ENCODE measurements at regions of chr6 and their contacts with region 1.

Region 1: GRCh38 chr6:28104392-28105244 is 19.8 kb upstream of the ZSCAN16 start:
- DNase-seq: peak; percentile 85 to 94 (median 90)
- ATAC-seq: peak; percentile 100
- H3K4me3 ChIP-seq: peak overlapping the region; percentile 57
- H3K27ac ChIP-seq: peak overlapping the region; percentile 70
- H3K4me1 ChIP-seq: peaks cover 4 to 7% of the 10 kb centered on the region in 2 experiments; a peak in 3 of 5 replicates
- H3K27me3 ChIP-seq: no peaks in the 10 kb centered on the region
- CTCF ChIP-seq: peak; percentile 73 to 92 (median 77)
- EP300 ChIP-seq: 0 out of 2 replicates have a peak, but pooled peaks have one; percentile 3
- POLR2A ChIP-seq: peak; percentile 95
- RAD21 ChIP-seq: peak; percentile 46 to 59

Region 2: DNA sequence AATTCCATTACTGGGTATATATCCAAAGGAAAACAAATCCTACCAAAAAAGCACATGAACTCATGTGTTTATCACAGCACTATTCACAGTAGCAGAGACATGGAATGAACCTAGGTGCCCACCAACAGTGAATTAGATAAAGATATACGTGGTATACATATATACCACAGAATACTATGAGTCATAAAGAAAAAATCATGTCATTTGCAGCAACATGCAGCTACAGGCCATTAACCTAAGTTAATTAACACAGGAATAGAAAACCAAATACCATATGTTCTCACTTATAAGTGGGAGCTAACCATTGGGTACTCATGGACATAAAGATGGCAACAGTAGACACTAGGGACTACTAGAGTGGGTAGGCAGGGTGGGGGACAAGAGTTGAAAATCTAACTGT is 196.6 kb before region 1 on chr6:
- CTCF ChIA-PET with region 1: no interaction called
- POLR2A ChIA-PET with region 1: no interaction called
- in situ Hi-C with region 1: no loop called
- intact Hi-C with region 1: loop called (anchors 5 kb)
- DNase-seq: no peak
- ATAC-seq: no peak
- H3K4me3 ChIP-seq: no peak overlapping the region
- H3K27ac ChIP-seq: no peak overlapping the region
- H3K4me1 ChIP-seq: peaks cover 4 to 8% of the 10 kb centered on the region in 2 experiments; a peak in 4 of 5 replicates
- H3K27me3 ChIP-seq: no peaks in the 10 kb centered on the region
- CTCF ChIP-seq: no peak
- EP300 ChIP-seq: no peak
- POLR2A ChIP-seq: no peak
- RAD21 ChIP-seq: no peak

Region 3: DNA sequence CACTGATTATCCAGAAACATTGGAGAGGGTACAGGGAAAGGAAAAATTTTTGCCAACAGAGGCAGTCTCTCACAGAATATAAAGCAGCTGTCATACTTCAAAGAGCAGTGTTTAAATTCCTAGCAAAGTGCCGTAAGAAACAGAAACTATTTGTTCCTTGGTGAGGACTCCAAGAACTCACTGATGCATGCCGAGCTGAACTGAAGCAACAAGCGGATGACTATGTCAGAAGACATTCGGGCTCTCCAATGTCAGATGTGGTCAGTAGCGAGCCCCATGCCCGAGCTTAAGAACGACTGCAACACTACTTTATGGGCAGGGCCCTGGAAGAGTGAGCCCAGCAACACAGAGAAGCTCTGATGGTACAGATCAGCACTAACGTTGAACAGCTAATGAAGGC is 92.9 kb before region 1 on chr6:
- CTCF ChIA-PET with region 1: no interaction called
- POLR2A ChIA-PET with region 1: no interaction called
- in situ Hi-C with region 1: no loop called
- intact Hi-C with region 1: no loop called
- DNase-seq: no peak
- ATAC-seq: no peak
- H3K4me3 ChIP-seq: no peak overlapping the region
- H3K27ac ChIP-seq: no peak overlapping the region
- H3K4me1 ChIP-seq: no peaks in the 10 kb centered on the region
- H3K27me3 ChIP-seq: no peaks in the 10 kb centered on the region
- CTCF ChIP-seq: no peak
- EP300 ChIP-seq: no peak
- POLR2A ChIP-seq: no peak
- RAD21 ChIP-seq: no peak

Region 4: GRCh38 chr6:28080631-28081485 is 23.8 kb before region 1 on chr6:
- CTCF ChIA-PET with region 1: no interaction called
- POLR2A ChIA-PET with region 1: interaction called, 3 read pairs
- in situ Hi-C with region 1: no loop called
- intact Hi-C with region 1: loop called (anchors 2 kb)
- DNase-seq: peak; percentile 91 to 99 (median 93)
- ATAC-seq: peak; percentile 91
- H3K4me3 ChIP-seq: peak overlapping the region; percentile 96
- H3K27ac ChIP-seq: peak overlapping the region; percentile 94
- H3K4me1 ChIP-seq: peaks cover 0 to 2% of the 10 kb centered on the region in 2 experiments; a peak in 4 of 5 replicates
- H3K27me3 ChIP-seq: no peaks in the 10 kb centered on the region
- CTCF ChIP-seq: no peak; a peak in 1 of 6 replicates
- EP300 ChIP-seq: peak; percentile 68; the same call in 1 of the 2 replicates
- POLR2A ChIP-seq: peak; percentile 79
- RAD21 ChIP-seq: no peak; a peak in 2 of 4 replicates

Region 5: DNA sequence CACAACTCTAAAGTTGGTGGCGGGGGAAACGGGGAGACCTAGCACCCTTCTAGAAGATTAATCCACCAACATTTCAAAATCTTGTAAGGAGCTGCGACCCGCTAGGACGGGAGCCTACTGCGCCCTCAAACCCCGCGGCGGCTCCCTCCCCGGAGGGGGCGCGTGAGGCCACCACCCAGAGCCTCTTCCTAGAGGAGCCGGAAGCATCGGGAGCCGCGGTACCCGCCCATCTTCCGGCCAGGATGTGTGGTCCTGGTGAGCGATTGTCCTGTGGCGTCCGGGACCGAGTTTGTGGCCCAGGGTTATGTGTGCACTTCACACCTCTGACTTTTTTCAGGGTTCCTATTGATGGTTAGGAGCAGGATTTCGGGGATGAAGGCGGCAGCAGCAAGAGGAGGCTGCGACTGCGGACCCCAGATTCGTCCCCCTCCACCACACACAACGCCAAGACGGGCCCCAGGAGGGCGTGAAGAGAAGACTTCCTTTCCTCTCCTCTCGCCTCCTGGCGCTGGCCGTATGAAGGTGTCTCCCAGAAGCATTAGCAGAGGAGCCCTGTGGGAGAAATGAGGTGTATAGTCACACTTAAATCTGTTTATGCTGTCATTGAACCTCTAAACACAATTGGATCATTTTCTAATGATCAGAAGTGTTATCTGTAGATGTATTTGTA is 13.6 kb before region 1 on chr6:
- CTCF ChIA-PET with region 1: no interaction called
- POLR2A ChIA-PET with region 1: interaction called, 10 read pairs
- in situ Hi-C with region 1: no loop called
- intact Hi-C with region 1: no loop called
- DNase-seq: no peak
- ATAC-seq: no peak
- H3K4me3 ChIP-seq: no peak overlapping the region
- H3K27ac ChIP-seq: no peak overlapping the region
- H3K4me1 ChIP-seq: peaks cover 0 to 5% of the 10 kb centered on the region in 2 experiments; a peak in 1 of 5 replicates
- H3K27me3 ChIP-seq: no peaks in the 10 kb centered on the region
- CTCF ChIP-seq: no peak
- EP300 ChIP-seq: no peak
- POLR2A ChIP-seq: no peak
- RAD21 ChIP-seq: no peak

Region 6: DNA sequence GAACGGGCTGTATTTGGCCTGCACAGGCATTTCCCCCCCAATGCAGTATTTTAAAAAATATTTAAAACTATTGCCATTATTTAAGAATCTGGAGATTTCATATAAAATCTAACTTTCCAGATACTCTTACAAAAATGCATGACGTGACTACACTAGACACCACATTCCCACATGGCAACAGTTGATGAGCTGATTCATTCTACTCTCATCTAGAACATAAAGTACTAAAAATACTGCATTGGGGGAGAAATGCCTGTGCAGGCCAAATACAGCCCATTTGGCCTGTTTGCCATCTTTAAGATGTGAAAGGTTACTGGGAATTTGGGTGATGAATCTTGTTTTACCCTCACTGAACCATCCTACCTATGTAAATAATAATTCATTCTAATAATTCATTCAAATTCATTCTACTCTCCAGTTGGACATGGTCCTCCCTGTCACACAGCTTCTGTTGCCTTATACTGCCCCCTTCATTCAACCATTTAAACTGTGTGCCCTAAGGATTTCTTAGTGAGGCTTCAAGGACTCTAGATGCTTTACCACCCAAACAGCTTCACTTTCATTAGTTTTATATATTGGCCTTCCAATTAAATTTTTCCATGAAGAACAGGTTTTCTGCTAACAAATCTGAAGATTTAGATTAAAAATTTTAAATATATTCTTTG is 12.9 kb after region 1 on chr6:
- CTCF ChIA-PET with region 1: no interaction called
- POLR2A ChIA-PET with region 1: interaction called, 13 read pairs
- in situ Hi-C with region 1: no loop called
- intact Hi-C with region 1: no loop called
- DNase-seq: no peak
- ATAC-seq: peak; percentile 63; the same call in 2 of the 3 replicates
- H3K4me3 ChIP-seq: no peak overlapping the region
- H3K27ac ChIP-seq: no peak overlapping the region
- H3K4me1 ChIP-seq: no peaks in the 10 kb centered on the region; a peak in 1 of 5 replicates
- H3K27me3 ChIP-seq: no peaks in the 10 kb centered on the region
- CTCF ChIP-seq: peak in 2 of 3 experiments; percentile 13 to 45; a peak in 2 of 6 replicates
- EP300 ChIP-seq: no peak
- POLR2A ChIP-seq: no peak
- RAD21 ChIP-seq: no peak

Region 7: DNA sequence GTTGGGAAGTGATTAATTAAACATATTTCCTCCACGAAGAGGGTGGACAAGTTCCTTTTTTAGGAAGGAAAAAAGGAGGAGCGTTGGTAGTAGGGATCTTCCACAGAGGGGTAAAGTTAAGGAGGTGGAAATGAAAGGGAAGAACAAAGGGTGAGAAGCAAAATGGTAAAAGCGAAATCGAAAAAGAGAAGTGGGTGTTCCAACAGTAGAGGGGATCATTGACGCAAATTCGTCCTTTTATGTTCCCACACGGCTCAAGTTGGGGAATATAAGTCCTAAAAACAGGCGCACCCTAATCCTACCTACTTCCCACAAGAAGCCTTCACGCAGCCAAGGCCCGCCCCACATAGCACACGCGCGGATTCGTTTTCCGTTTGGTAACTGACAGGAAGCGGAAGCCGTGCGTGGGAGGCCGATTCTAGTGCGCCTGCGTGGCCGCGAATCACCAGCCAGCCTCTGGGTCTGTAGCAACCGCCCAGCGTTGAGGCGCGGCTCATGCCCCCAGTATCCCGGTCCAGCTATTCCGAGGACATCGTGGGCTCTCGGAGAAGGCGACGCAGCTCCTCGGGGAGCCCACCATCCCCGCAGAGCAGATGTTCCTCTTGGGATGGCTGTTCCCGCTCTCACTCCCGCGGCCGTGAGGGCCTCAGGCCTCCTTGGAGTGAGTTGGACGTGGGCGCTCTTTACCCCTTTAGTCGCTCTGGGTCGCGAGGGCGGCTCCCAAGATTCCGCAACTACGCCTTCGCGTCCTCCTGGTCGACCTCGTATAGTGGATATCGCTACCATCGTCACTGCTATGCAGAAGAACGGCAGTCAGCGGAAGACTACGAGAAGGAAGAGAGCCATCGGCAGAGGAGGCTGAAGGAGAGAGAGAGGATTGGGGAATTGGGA is 154.5 kb after region 1 on chr6 and contains the start of gene NKAPL:
- CTCF ChIA-PET with region 1: no interaction called
- POLR2A ChIA-PET with region 1: no interaction called
- in situ Hi-C with region 1: no loop called
- intact Hi-C with region 1: no loop called
- DNase-seq: no peak
- ATAC-seq: no peak
- H3K4me3 ChIP-seq: no peak within 1 kb of the TSS
- H3K27ac ChIP-seq: no peak within 1 kb of the TSS
- H3K4me1 ChIP-seq: peaks cover 1 to 4% of the 10 kb centered on the region in 2 experiments; a peak in 1 of 5 replicates
- H3K27me3 ChIP-seq: no peaks in the 10 kb centered on the region
- CTCF ChIP-seq: no peak
- EP300 ChIP-seq: no peak
- POLR2A ChIP-seq: no peak
- RAD21 ChIP-seq: no peak
- polyA plus RNA-seq, gene NKAPL: not detected